ENCODE measurements at regions of chr14 and their contacts with region 1.

Region 1: DNA sequence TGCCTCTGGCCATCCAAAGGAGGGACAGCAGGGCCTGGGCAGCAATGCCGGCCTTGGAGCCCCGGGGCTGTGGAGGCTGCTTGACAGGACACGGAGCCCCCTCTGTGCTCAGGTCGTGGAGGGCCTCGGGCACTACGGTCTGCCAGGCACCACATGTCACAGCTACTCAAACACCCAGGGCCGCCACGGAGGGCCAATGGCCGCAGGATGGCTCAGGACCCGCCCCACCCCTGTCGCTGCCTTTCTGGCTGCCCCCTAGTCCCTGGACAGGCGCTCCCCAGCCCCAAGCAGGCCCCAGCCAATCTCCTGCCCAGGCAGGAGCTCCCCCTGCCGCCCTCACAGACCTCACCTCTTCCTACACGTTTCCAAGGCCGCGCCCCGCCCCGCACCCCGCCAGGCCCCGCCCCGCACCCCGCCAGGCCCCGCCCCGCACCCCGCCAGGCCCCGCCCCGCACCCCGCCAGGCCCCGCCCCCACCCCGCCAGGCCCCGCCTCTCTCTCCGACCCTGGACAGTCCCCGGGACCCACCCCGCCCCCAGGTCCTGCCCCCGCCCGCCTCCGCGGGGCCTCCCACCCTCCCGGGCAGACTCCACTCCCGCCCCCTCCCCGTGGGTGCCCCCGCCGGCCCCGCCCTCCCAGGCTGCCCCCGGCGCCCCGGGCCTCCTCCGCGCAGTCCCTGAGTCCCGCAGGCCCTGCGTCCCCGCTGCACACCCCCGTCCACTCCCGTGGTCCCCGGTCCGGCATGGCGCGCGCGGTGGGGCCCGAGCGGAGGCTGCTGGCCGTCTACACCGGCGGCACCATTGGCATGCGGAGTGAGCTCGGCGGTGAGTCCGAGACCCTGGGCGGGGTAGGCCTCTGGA is at the start of gene ASPG:
- DNase-seq: peak in 5 of 7 donors; percentile 9 to 67 (median 21)
- H3K4me3 ChIP-seq: peak within 1 kb of the TSS in 1 of 4 donors; percentile 75
- H3K27ac ChIP-seq: peak within 1 kb of the TSS in 1 of 5 donors; percentile 84
- H3K4me1 ChIP-seq: peaks cover 0 to 5% of the 10 kb centered on the region in 2 donors
- H3K27me3 ChIP-seq: no peaks in the 10 kb centered on the region
- CTCF ChIP-seq: no peak
- POLR2A ChIP-seq: no peak
- total RNA-seq, gene ASPG: 0.17 to 9.1 (median 3.2) TPM

Region 2: GRCh38 chr14:103696466-103697071 is 388.7 kb before region 1 on chr14:
- intact Hi-C with region 1: no loop called
- DNase-seq: peak in 2 of 7 donors; percentile 34 to 65
- H3K4me3 ChIP-seq: no peak overlapping the region
- H3K27ac ChIP-seq: peak overlapping the region in 2 of 5 donors; percentile 30 to 57
- H3K4me1 ChIP-seq: peaks cover 14 to 38% of the 10 kb centered on the region in 2 donors
- H3K27me3 ChIP-seq: no peaks in the 10 kb centered on the region
- CTCF ChIP-seq: no peak
- POLR2A ChIP-seq: no peak

Region 3: GRCh38 chr14:104130974-104131651 is 45.9 kb after region 1 on chr14:
- intact Hi-C with region 1: loop called in 1 of 2 experiments (anchors 2 kb)
- DNase-seq: peak in 5 of 7 donors; percentile 58 to 64 (median 62)
- H3K4me3 ChIP-seq: no peak overlapping the region
- H3K27ac ChIP-seq: no peak overlapping the region
- H3K4me1 ChIP-seq: no peaks in the 10 kb centered on the region
- H3K27me3 ChIP-seq: peaks cover 21% of the 10 kb centered on the region
- CTCF ChIP-seq: peak; percentile 45 to 78 (median 60)
- POLR2A ChIP-seq: no peak

Region 4: GRCh38 chr14:104639889-104640548 is 554.8 kb after region 1 on chr14:
- intact Hi-C with region 1: loop called in 1 of 2 experiments (anchors 10 kb)
- DNase-seq: peak; percentile 51 to 80 (median 65)
- H3K4me3 ChIP-seq: no peak overlapping the region
- H3K27ac ChIP-seq: no peak overlapping the region
- H3K4me1 ChIP-seq: no peaks in the 10 kb centered on the region
- H3K27me3 ChIP-seq: no peaks in the 10 kb centered on the region
- CTCF ChIP-seq: peak; percentile 71 to 91 (median 85)
- POLR2A ChIP-seq: no peak